ENCODE measurements at regions of chr4 and their contacts with region 1.

Region 1: DNA sequence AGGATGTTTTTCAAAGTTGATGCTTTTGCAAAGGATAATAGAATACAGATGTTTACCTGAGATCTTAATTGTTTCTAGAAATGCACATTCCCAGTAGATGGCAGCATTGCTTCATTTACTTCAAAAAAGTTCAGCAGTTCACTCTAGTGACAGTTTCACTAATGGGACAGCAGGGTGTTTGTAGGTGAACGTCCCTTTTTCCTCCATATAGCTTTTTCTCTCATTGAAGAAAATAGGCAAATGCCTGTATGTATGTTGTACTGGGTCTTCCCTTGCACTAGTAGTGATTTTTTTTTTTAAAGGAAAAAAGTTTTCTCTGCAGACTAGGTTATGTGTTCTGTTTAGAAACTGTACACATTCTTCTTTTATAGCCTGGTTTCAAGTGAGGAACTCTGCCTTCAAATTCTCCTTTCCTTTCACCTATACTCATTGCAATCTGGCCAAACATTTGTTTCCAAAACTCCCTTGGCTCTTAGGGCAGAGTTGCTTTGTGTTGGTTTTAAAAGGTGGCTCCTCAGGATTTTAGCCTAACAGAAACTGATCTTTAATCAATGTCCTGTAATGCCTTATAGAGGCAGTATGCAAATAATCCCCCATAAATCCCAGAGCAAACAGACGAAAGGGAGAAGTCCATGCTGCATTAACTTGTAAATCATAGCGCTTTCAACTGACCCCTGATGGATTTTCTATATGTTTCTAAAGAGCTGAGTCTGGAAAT is 86.3 kb downstream of the EGF start:
- DNase-seq: peak; percentile 30
- H3K4me3 Mint-ChIP-seq: no peak overlapping the region
- H3K27ac Mint-ChIP-seq: no peak overlapping the region
- H3K4me1 Mint-ChIP-seq: no peaks in the 10 kb centered on the region
- H3K27me3 Mint-ChIP-seq: no peaks in the 10 kb centered on the region
- CTCF ChIP-seq: no peak

Region 2: GRCh38 chr4:110310795-110311194 is 311.8 kb after region 1 on chr4:
- CTCF ChIA-PET with region 1: no interaction called
- intact Hi-C with region 1: loop called (anchors 2 kb)
- DNase-seq: no peak
- H3K4me3 Mint-ChIP-seq: no peak overlapping the region
- H3K27ac Mint-ChIP-seq: no peak overlapping the region
- H3K4me1 Mint-ChIP-seq: no peaks in the 10 kb centered on the region
- H3K27me3 Mint-ChIP-seq: no peaks in the 10 kb centered on the region
- CTCF ChIP-seq: no peak